Pancreas (tissue), 10 donors: ENCODE measurements at regions of chr22 and their contacts with region 1.

Region 1: DNA sequence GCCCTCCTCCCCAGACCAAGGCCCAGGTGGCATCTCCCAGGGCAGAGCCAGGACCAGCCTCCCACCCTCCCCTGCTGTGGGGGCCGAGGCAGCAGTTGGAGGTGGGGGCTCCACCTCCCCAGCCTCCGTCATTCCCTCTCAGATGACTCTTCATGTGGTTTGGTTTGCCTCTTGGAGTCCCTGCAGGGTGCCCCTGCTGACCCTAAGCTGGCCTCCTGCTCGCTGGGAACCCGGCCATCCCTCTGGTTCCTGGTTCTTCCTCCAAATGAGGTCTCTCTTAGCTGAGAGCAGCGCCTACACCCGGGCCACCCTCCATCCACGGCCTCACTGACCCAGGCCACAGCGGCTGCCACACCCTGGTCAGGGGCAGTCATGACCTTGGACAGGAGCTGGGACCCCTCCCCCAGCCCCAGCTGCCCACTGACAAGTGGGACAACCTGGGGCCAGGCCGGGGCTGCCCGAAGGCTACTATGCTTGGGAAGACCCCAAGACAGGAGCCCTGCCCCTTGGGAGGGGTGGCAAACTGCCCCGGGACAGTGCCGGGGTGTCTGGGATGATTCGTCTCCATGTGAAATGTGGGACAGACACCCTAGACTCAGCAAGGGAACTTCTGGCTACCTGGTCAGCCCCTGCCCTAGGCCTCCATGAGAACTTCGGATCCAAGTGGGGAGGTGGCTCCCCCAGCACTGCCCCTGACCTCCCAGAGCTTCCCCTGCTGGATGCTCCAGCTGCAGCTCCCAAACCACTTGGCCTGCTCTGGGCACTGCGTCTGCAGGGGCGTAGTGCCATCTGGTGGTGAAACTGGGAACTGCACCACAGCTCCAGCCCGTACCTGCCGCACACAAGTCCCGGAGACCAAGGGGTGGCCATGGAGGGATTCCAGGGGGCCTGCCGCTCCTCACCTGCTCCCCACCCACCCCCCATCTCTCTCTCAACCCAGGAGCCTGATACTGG is 194.5 kb downstream of the IGLL1 start:
- DNase-seq: peak; percentile 65 to 98 (median 88)
- ATAC-seq: peak; percentile 90 to 97 (median 94)
- H3K4me3 ChIP-seq: no peak overlapping the region
- H3K27ac ChIP-seq: no peak overlapping the region
- H3K4me1 ChIP-seq: no peaks in the 10 kb centered on the region
- H3K27me3 ChIP-seq: no peaks in the 10 kb centered on the region
- CTCF ChIP-seq: peak; percentile 94 to 100 (median 99)

Region 2: GRCh38 chr22:23178512-23179254 is 206.9 kb before region 1 on chr22:
- intact Hi-C with region 1: loop called in 1 of 3 experiments (anchors 5 kb)
- DNase-seq: peak; percentile 45 to 88 (median 72)
- ATAC-seq: peak; percentile 54 to 71 (median 64)
- H3K4me3 ChIP-seq: no peak overlapping the region
- H3K27ac ChIP-seq: peak overlapping the region in 2 of 4 donors; percentile 64 to 69
- H3K4me1 ChIP-seq: peaks cover 3 to 33% (median 4%) of the 10 kb centered on the region in 3 donors
- H3K27me3 ChIP-seq: no peaks in the 10 kb centered on the region
- CTCF ChIP-seq: peak; percentile 89 to 96 (median 92)

Region 3: DNA sequence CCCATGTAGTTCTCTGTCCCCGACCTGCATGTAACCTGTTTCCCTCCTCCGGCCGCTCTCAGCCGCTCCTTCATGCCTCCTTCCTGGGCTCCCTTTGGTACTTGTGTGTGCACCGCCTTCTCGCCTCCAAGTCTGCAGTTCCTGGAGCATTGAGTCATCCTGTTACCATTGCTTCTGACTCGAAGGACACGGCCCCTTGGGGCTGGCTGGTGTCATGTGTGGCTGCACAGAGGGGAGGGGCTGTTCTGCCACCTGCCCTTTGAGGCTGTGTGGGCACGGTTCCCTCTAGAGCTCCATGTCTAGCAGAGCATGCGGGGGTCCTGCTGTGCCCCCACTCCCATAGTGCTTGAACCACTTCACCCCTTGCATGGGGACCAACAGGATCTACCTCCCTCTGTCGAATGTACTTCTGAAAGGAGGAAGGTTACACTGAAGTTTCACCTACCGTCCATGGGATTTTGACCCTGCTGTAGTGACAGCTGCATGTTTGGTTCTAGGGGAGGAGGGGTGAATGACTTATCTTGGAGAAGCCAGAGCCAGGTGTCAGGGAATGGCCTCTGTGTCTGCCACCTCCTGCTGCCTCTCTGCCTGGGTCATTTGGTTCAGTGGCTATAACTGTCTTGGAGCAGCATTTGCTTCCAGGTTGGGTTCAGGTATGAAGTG is 165.6 kb before region 1 on chr22:
- intact Hi-C with region 1: no loop called
- DNase-seq: peak in 2 of 6 donors; percentile 32 to 59
- ATAC-seq: peak; percentile 19 to 51 (median 31)
- H3K4me3 ChIP-seq: no peak overlapping the region
- H3K27ac ChIP-seq: peak overlapping the region in 2 of 4 donors; percentile 65 to 73
- H3K4me1 ChIP-seq: peaks cover 8 to 67% (median 17%) of the 10 kb centered on the region in 3 donors
- H3K27me3 ChIP-seq: no peaks in the 10 kb centered on the region
- CTCF ChIP-seq: no peak

Region 4: DNA sequence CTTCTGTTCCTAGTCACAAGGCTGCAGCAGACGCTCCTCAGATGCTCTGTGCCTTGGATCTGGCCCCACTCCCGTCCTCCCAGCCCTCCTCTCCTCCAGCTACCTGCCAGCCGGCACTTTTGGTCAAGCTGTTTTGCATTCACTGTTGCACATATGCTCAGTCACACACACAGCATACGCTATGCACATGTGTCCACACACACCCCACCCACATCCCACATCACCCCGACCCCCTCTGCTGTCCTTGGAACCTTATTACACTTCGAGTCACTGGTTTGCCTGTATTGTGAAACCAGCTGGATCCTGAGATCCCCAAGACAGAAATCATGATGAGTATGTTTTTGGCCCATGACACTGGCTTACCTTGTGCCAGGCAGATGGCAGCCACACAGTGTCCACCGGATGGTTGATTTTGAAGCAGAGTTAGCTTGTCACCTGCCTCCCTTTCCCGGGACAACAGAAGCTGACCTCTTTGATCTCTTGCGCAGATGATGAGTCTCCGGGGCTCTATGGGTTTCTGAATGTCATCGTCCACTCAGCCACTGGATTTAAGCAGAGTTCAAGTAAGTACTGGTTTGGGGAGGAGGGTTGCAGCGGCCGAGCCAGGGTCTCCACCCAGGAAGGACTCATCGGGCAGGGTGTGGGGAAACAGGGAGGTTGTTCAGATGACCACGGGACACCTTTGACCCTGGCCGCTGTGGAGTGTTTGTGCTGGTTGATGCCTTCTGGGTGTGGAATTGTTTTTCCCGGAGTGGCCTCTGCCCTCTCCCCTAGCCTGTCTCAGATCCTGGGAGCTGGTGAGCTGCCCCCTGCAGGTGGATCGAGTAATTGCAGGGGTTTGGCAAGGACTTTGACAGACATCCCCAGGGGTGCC is 95.5 kb before region 1 on chr22:
- intact Hi-C with region 1: loop called in 1 of 3 experiments (anchors 10 kb)
- DNase-seq: peak in 4 of 6 donors; percentile 34 to 85 (median 68)
- ATAC-seq: peak; percentile 73 to 84 (median 77)
- H3K4me3 ChIP-seq: no peak overlapping the region
- H3K27ac ChIP-seq: no peak overlapping the region
- H3K4me1 ChIP-seq: no peaks in the 10 kb centered on the region
- H3K27me3 ChIP-seq: no peaks in the 10 kb centered on the region
- CTCF ChIP-seq: peak; percentile 62 to 80 (median 71)

Region 5: GRCh38 chr22:23315341-23315917 is 70.1 kb before region 1 on chr22:
- intact Hi-C with region 1: loop called in 1 of 3 experiments (anchors 10 kb)
- DNase-seq: peak in 5 of 6 donors; percentile 47 to 85 (median 59)
- ATAC-seq: peak in 3 of 4 donors; percentile 28 to 45 (median 35)
- H3K4me3 ChIP-seq: no peak overlapping the region
- H3K27ac ChIP-seq: no peak overlapping the region
- H3K4me1 ChIP-seq: no peaks in the 10 kb centered on the region
- H3K27me3 ChIP-seq: no peaks in the 10 kb centered on the region
- CTCF ChIP-seq: peak in 2 of 4 donors; percentile 54 to 81

Region 6: GRCh38 chr22:23574371-23574811 is 188.8 kb after region 1 on chr22:
- intact Hi-C with region 1: no loop called
- DNase-seq: peak in 1 of 6 donors; percentile 35
- ATAC-seq: no peak
- H3K4me3 ChIP-seq: no peak overlapping the region
- H3K27ac ChIP-seq: no peak overlapping the region
- H3K4me1 ChIP-seq: no peaks in the 10 kb centered on the region
- H3K27me3 ChIP-seq: no peaks in the 10 kb centered on the region
- CTCF ChIP-seq: no peak

Region 7: DNA sequence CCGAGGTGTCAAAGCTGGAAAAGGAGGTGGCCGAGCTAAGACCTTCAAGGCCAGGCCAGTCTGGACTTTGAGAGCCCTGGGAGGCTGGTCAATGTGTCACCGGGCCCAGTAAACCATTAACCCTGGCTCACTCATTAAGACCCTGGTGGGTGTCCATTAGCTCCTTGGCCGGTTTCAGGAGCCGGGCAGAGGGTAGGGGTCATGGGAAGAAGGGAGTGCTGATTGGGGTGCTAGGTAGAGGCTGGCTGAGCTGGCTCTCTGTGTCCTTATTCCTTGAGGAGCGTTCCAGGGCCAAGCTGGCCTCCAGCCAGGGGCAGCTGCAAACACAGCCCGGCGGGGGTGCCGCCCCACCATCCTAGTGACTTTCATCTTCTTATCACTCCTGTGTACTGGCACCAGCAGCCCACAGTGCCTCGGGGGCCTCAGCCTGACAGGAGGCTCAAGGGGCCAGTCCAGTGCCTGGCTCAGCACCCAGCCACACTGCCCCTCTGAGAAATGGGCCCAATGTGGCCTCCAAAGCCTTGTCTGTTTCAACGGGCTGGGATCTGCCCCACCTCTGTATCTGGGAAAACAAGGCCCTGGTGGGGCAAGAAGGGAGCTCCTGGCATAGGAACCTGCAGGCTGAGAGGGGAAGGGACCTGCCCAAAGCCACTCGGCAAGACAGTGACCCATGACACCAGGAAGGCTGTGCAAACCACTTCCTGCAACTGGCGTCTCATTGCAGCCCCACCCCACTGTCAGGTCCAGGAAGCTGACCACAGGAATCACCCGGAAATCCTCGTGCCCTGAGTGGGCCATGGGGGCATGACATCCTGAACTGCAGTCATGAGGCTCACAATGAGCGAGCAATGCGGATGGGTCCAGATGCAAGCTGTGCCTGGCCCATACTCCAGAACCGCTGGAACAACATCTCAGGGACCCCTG is 290.2 kb after region 1 on chr22:
- intact Hi-C with region 1: no loop called
- DNase-seq: peak; percentile 45 to 87 (median 68)
- ATAC-seq: peak; percentile 63 to 81 (median 70)
- H3K4me3 ChIP-seq: no peak overlapping the region
- H3K27ac ChIP-seq: peak overlapping the region in 1 of 4 donors; percentile 41
- H3K4me1 ChIP-seq: peaks cover 0 to 11% (median 0%) of the 10 kb centered on the region in 3 donors
- H3K27me3 ChIP-seq: no peaks in the 10 kb centered on the region
- CTCF ChIP-seq: no peak